CD8-positive, alpha-beta T cell (primary cell): ENCODE measurements at regions of chr2 and their contacts with region 1.

Region 1: GRCh38 chr2:152012697-152013096 is 86.1 kb downstream of the CACNB4 start:
- DNase-seq: no peak
- ATAC-seq: no peak
- H3K4me3 ChIP-seq: no peak overlapping the region
- H3K4me3 Mint-ChIP-seq: no peak overlapping the region
- H3K27ac ChIP-seq: no peak overlapping the region
- H3K27ac Mint-ChIP-seq: no peak overlapping the region
- H3K4me1 ChIP-seq: no peaks in the 10 kb centered on the region
- H3K4me1 Mint-ChIP-seq: no peaks in the 10 kb centered on the region
- H3K27me3 ChIP-seq: peaks cover 3% of the 10 kb centered on the region in 2 experiments
- H3K27me3 Mint-ChIP-seq: peaks cover 26% of the 10 kb centered on the region
- CTCF ChIP-seq: no peak

Region 2: GRCh38 chr2:151999053-151999452 is 13.6 kb before region 1 on chr2:
- CTCF ChIA-PET with region 1: interaction called, 10 read pairs
- POLR2A ChIA-PET with region 1: no interaction called
- intact Hi-C with region 1: no loop called
- DNase-seq: peak in 7 of 9 experiments; percentile 23 to 64 (median 36)
- ATAC-seq: peak; percentile 61
- H3K4me3 ChIP-seq: no peak overlapping the region
- H3K4me3 Mint-ChIP-seq: no peak overlapping the region
- H3K27ac ChIP-seq: no peak overlapping the region
- H3K27ac Mint-ChIP-seq: no peak overlapping the region
- H3K4me1 ChIP-seq: no peaks in the 10 kb centered on the region
- H3K4me1 Mint-ChIP-seq: no peaks in the 10 kb centered on the region
- H3K27me3 ChIP-seq: no peaks in the 10 kb centered on the region
- H3K27me3 Mint-ChIP-seq: peaks cover 2% of the 10 kb centered on the region
- CTCF ChIP-seq: peak; percentile 76